T-cell (primary cell): ENCODE measurements at regions of chr7 and their contacts with region 1.

Region 1: GRCh38 chr7:128455551-128456254 is at the start of gene HILPDA:
- DNase-seq: peak; percentile 82 to 98 (median 90)
- ATAC-seq: peak; percentile 90 to 98 (median 96)
- H3K4me3 ChIP-seq: peak within 1 kb of the TSS; percentile 81 to 82
- H3K4me3 Mint-ChIP-seq: peak within 1 kb of the TSS; percentile 85 to 92 (median 91)
- H3K27ac ChIP-seq: peak within 1 kb of the TSS; percentile 88
- H3K27ac Mint-ChIP-seq: peak within 1 kb of the TSS; percentile 89 to 90
- H3K4me1 ChIP-seq: peaks cover 4 to 21% of the 10 kb centered on the region in 2 experiments
- H3K4me1 Mint-ChIP-seq: peaks cover 19 to 37% (median 28%) of the 10 kb centered on the region in 3 donors
- H3K27me3 ChIP-seq: peaks cover 0 to 8% of the 10 kb centered on the region in 2 experiments
- H3K27me3 Mint-ChIP-seq: no peaks in the 10 kb centered on the region
- total RNA-seq, gene HILPDA: 2.0 to 4.8 (median 3.3) TPM

Region 2: GRCh38 chr7:128281605-128282380 is 173.9 kb before region 1 on chr7:
- CTCF ChIA-PET with region 1: no interaction called
- POLR2A ChIA-PET with region 1: no interaction called
- DNase-seq: no peak
- ATAC-seq: no peak
- H3K4me3 ChIP-seq: no peak overlapping the region
- H3K4me3 Mint-ChIP-seq: no peak overlapping the region
- H3K27ac ChIP-seq: no peak overlapping the region
- H3K27ac Mint-ChIP-seq: no peak overlapping the region
- H3K4me1 ChIP-seq: no peaks in the 10 kb centered on the region
- H3K4me1 Mint-ChIP-seq: no peaks in the 10 kb centered on the region
- H3K27me3 ChIP-seq: no peaks in the 10 kb centered on the region
- H3K27me3 Mint-ChIP-seq: no peaks in the 10 kb centered on the region

Region 3: DNA sequence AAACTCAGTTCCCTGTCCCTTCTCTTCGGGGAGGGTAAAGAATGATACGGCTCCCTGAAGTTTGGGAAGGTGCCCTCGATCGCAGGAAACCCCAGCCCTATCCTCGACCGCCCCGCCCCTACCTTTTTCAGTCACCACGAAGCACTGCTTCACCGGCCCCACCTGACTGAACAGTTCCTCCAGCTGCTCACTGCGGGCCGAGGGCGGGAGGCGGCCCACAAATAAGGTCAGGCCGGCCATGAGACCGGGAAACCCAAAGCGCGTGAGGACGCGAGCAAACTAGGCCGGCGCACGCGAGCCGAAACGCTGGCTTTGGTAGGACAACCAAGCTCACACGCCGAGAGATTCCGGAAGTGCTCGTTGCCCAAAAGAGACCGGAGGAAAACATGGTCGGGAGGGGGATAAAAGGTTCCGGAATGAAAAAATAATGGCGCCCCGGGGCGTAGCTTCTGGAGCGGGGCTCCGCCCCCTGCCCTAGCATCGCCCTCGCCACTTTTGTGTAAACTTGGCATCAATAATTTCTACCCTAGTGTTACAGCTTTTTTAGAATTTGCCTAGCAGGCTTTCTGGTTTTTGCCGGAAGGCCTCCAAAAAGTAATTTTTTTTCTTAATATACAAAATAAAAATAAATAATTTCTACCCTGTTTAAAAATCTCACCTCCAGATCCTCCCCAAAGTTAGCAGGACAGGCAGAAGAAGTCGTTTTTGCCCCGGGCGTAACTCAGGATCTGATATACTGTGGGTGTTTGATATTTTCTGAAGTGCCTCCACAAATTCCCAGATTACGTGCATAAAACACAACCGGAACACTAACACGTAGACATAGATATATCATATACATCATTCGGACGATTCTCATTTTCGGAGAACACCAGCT is 111.9 kb before region 1 on chr7 and contains the start of gene RBM28:
- CTCF ChIA-PET with region 1: interaction called in 1 of 2 experiments, 10 read pairs
- POLR2A ChIA-PET with region 1: no interaction called
- DNase-seq: peak; percentile 71 to 92 (median 81)
- ATAC-seq: peak; percentile 94 to 98 (median 96)
- H3K4me3 ChIP-seq: peak within 1 kb of the TSS; percentile 69 to 91
- H3K4me3 Mint-ChIP-seq: peak within 1 kb of the TSS; percentile 92 to 95 (median 94)
- H3K27ac ChIP-seq: peak within 1 kb of the TSS; percentile 52
- H3K27ac Mint-ChIP-seq: peak within 1 kb of the TSS; percentile 89
- H3K4me1 ChIP-seq: peaks cover 13 to 17% of the 10 kb centered on the region in 2 experiments
- H3K4me1 Mint-ChIP-seq: peaks cover 22 to 32% (median 30%) of the 10 kb centered on the region in 3 donors
- H3K27me3 ChIP-seq: peaks cover 0 to 5% of the 10 kb centered on the region in 2 experiments
- H3K27me3 Mint-ChIP-seq: peaks cover 3 to 10% of the 10 kb centered on the region in 2 donors
- total RNA-seq, gene RBM28: 27.3 to 54.3 (median 41.9) TPM

Region 4: DNA sequence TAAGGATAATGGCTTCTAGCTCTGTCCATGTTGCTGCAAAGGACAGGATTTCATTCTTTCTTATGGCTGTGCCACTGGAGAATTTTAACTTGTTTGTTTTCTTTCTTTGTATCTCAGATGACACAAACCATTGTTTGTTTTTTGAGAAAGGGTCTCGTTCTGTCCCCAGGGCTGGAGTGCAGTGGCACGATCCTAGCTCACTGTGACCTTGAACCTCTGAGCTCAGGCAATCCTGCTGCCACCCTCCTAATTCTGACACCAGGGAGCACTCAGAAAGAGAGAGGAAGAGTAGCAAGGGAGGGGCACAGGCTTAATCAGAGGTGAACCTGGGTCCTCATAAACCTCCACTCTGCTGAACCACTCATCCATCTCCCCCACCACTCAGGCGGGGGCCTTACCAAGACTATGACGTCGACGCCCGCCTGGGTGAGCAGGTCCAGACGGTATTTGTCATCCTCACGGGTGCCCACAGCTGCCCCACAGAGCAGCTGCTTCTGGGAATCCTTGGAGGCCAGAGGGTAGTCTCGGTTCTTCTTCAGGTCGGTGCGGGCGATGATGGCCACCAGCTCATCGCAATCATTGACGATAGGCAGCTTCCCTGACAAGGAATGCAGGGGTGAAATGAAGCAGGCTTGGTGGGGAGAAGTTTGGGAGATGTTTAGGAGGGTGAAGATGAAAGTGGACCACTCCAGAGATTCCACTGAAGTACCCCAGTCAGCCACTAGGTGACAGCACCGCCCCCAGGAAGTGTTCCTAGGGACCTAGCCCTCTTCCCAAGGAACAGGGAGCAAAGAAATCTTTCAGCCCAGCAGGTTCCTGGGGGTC is 57.5 kb before region 1 on chr7:
- CTCF ChIA-PET with region 1: interaction called, 5 to 11 read pairs
- POLR2A ChIA-PET with region 1: interaction called in 1 of 2 experiments, 3 read pairs
- DNase-seq: peak in 10 of 35 experiments; percentile 13 to 61 (median 32)
- ATAC-seq: peak; percentile 32 to 61 (median 53)
- H3K4me3 ChIP-seq: no peak overlapping the region
- H3K4me3 Mint-ChIP-seq: no peak overlapping the region
- H3K27ac ChIP-seq: no peak overlapping the region
- H3K27ac Mint-ChIP-seq: no peak overlapping the region
- H3K4me1 ChIP-seq: no peaks in the 10 kb centered on the region
- H3K4me1 Mint-ChIP-seq: peaks cover under 1 to 7% (median 2%) of the 10 kb centered on the region in 3 donors
- H3K27me3 ChIP-seq: no peaks in the 10 kb centered on the region
- H3K27me3 Mint-ChIP-seq: no peaks in the 10 kb centered on the region

Region 5: DNA sequence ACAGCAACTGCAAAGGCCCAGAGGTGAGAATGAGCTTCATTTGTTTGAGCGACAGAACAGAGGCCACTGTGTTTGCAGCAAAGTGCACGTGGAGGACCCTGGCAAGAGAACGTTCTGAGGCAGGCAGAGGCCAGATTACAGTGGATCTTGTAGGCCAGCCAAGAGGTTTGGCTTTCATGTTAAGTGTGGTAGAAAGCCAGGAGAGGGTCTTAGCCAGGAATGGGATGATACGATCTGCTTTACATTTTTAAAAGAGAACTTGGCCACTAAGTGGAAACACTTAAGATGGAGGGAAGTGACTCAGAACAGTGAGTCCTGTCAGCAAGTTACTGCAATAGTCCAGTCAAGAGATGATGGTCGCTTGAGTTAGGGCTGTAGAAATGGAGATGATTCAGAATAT is 340.6 kb after region 1 on chr7:
- CTCF ChIA-PET with region 1: no interaction called
- POLR2A ChIA-PET with region 1: no interaction called
- DNase-seq: no peak
- ATAC-seq: no peak
- H3K4me3 ChIP-seq: no peak overlapping the region
- H3K4me3 Mint-ChIP-seq: no peak overlapping the region
- H3K27ac ChIP-seq: no peak overlapping the region
- H3K27ac Mint-ChIP-seq: no peak overlapping the region
- H3K4me1 ChIP-seq: peaks cover 0 to 16% of the 10 kb centered on the region in 2 experiments
- H3K4me1 Mint-ChIP-seq: peaks cover 6 to 8% (median 7%) of the 10 kb centered on the region in 3 donors
- H3K27me3 ChIP-seq: no peaks in the 10 kb centered on the region
- H3K27me3 Mint-ChIP-seq: no peaks in the 10 kb centered on the region